Activated CD4-positive, alpha-beta memory T cell treated with anti-CD3 and anti-CD28 coated beads for 36 hours (primary cell): ENCODE measurements at regions of chr6 and their contacts with region 1.

Region 1: DNA sequence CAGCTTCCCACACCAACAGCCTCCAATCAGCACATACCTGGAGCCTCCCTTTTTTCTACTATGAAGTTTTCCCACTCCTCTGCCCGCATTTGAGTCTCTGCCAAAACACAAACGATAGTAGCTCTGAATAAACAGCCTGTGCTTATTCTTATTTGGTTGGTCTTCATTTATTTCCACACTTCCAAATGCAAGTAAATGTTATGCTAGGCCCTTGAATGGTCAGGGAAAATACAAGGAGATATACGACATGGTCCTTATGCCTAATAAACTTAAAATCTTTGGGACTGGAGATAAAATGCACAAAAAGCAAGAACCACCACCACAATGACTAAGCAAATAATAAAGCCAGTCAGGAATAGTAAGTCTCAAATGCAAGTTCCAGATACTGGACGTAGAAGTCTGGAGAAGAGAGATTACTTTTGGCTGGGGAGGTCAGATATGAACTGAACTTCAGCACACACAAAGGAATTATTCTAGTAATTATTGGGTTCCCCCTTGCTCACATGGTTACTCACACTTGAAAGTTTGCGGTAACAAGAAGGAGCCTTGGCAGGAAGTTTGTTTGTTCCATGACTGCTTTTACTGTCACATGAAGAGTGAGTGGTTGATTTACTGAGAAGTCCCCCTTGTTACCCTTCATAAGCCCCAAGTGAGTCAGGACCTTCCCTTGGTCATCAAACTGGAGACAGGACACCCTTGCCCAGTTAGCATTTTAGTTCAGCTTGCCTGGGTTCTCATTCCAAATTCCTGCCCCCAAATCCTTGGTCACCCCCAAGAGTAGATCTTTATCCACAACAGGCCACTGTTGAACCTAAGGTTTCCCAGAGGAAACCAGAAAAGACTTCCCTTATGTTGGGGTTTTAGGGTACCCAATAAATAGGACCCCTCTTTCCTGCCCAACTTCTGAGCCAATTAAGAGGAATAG is 511.2 kb upstream of the JARID2 start:
- DNase-seq: peak; percentile 67
- H3K4me3 Mint-ChIP-seq: peak overlapping the region; percentile 73
- H3K27ac Mint-ChIP-seq: peak overlapping the region; percentile 100
- H3K4me1 Mint-ChIP-seq: peaks cover 98% of the 10 kb centered on the region
- H3K27me3 Mint-ChIP-seq: no peaks in the 10 kb centered on the region

Region 2: GRCh38 chr6:14276667-14277404 is 457.8 kb before region 1 on chr6:
- CTCF ChIA-PET with region 1: no interaction called
- POLR2A ChIA-PET with region 1: no interaction called
- intact Hi-C with region 1: loop called (anchors 2 kb)
- DNase-seq: peak; percentile 44
- H3K4me3 Mint-ChIP-seq: no peak overlapping the region
- H3K27ac Mint-ChIP-seq: peak overlapping the region; percentile 85
- H3K4me1 Mint-ChIP-seq: peaks cover 39% of the 10 kb centered on the region
- H3K27me3 Mint-ChIP-seq: no peaks in the 10 kb centered on the region

Region 3: DNA sequence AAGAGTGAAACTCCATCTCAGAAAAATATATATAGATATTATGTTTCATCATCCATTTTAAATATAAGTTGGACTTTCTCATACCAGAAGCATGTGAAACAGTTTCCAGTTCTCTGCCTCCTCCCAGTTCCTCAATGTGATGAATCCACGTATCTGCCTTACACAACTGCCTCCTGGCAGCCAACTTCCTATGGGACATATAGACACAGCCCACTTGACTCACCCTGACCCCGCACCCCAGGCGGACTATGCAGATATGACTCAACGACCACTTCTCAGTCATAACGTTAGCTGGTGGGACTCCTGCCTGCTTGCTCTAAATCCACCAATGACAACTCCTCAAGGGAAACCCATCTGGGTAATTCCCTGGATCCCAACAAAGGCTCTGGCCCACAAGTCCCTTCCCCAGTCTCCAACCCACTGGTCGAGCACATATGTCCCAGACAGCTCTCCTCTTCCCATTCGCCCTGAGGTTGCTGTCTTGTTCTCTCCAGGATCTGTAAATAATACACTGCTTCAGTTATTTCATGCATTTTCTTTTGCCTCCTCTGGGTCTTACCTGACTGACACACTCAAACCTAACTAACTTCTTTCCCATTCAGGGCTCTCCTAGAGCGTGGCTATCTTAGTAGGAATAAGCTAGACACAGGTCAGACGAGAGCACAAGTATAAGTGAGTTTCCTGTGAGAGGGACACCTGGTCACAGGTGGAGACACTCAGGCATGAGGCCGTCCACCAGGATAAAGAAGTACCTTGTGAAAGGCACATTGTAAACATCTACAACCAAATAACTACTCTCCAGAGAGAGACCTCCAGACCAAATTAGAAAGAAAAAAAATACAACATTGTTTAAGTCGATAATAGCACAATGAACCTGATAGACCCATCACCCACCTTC is 68.6 kb before region 1 on chr6:
- CTCF ChIA-PET with region 1: no interaction called
- POLR2A ChIA-PET with region 1: no interaction called
- intact Hi-C with region 1: loop called (anchors 2 kb)
- DNase-seq: peak; percentile 84
- H3K4me3 Mint-ChIP-seq: no peak overlapping the region
- H3K27ac Mint-ChIP-seq: peak overlapping the region; percentile 11
- H3K4me1 Mint-ChIP-seq: peaks cover 25% of the 10 kb centered on the region
- H3K27me3 Mint-ChIP-seq: no peaks in the 10 kb centered on the region

Region 4: DNA sequence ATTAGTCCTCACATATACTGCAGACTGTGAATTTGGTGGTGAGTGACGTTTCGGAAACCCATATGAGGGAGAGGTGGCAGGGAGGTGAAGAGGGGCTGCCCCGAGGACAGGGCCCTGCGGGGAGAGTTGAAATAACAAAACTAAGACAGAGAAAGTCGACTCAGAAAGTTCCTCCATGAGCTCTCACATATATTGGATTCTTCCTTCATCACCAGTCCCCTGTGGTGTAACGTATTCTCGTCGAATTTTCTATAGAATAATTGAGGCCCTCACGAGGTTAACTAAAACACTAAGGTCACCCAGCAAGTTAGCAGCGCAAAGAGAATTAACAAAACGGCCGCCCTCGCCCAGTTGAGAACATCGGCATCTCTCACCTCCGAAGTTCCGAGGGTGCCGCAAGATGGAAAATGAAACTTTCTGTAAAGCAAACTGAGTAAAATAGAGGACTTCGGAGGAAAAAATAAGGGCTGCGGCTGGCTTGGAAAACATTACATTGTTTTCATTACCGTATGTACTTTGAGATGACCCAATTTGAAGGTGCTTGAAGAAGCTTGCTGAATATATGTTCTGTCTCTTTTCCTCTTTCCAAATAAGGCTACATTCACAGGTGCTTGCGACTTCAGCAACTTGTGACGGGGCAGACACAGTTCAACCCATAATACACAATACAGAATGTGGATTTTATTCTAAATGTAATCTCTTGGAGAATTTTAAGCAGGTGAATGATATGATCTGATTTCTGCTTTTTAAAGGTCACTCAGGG is 20.3 kb after region 1 on chr6:
- CTCF ChIA-PET with region 1: interaction called, 16 read pairs
- POLR2A ChIA-PET with region 1: interaction called, 84 read pairs
- intact Hi-C with region 1: loop called (anchors 1 kb)
- DNase-seq: peak; percentile 90
- H3K4me3 Mint-ChIP-seq: peak overlapping the region; percentile 61
- H3K27ac Mint-ChIP-seq: peak overlapping the region; percentile 100
- H3K4me1 Mint-ChIP-seq: peaks cover 73% of the 10 kb centered on the region
- H3K27me3 Mint-ChIP-seq: no peaks in the 10 kb centered on the region

Region 5: GRCh38 chr6:14765106-14765505 is 30.4 kb after region 1 on chr6:
- CTCF ChIA-PET with region 1: no interaction called
- POLR2A ChIA-PET with region 1: no interaction called
- intact Hi-C with region 1: no loop called
- DNase-seq: no peak
- H3K4me3 Mint-ChIP-seq: no peak overlapping the region
- H3K27ac Mint-ChIP-seq: no peak overlapping the region
- H3K4me1 Mint-ChIP-seq: peaks cover 19% of the 10 kb centered on the region
- H3K27me3 Mint-ChIP-seq: no peaks in the 10 kb centered on the region

Region 6: DNA sequence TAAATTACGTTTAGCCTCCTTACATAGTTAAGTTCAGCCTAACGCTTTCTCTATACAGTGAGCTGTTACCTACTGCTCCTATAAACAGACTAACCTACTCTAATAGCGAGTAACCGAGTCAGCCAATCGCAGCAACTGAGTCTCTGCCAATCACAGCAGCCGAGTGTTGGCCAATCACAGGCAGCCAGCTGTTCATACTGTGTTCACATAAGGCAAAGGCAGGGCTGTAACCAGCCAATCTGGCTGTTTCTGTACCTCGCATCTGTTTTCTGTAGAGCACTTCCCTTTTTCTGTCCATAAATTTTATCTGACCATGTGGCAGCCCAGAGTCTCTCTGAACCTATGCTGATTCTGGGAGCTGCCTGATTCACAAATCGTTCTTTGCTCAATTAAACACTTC is 247.3 kb after region 1 on chr6:
- CTCF ChIA-PET with region 1: no interaction called
- POLR2A ChIA-PET with region 1: no interaction called
- intact Hi-C with region 1: no loop called
- DNase-seq: no peak
- H3K4me3 Mint-ChIP-seq: no peak overlapping the region
- H3K27ac Mint-ChIP-seq: no peak overlapping the region
- H3K4me1 Mint-ChIP-seq: peaks cover 4% of the 10 kb centered on the region
- H3K27me3 Mint-ChIP-seq: peaks cover 6% of the 10 kb centered on the region

Region 7: DNA sequence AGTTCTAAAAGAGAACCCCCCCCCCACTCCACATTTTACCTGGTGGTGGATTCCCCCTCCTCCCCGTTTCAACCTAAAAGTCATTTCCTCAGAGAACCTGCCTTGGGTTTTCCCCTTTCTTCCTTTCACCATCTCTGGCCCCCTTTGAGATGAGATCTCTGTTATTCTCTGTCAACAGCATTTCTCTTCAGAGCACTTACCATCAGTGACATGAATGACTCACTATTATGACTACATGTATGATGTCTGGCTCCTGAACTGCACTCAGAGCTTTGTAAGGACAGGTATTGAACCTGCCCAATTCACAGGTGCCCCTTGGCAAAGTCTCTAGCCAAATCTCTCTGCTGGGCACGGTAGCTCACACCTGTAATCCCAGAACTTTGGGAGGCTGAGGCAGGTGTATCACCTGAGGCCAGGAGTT is 449.8 kb after region 1 on chr6:
- CTCF ChIA-PET with region 1: no interaction called
- POLR2A ChIA-PET with region 1: no interaction called
- intact Hi-C with region 1: loop called (anchors 2 kb)
- DNase-seq: peak; percentile 58
- H3K4me3 Mint-ChIP-seq: peak overlapping the region; percentile 37
- H3K27ac Mint-ChIP-seq: peak overlapping the region; percentile 95
- H3K4me1 Mint-ChIP-seq: peaks cover 20% of the 10 kb centered on the region
- H3K27me3 Mint-ChIP-seq: no peaks in the 10 kb centered on the region

Region 8: GRCh38 chr6:15491255-15491985 is 756.7 kb after region 1 on chr6:
- CTCF ChIA-PET with region 1: no interaction called
- POLR2A ChIA-PET with region 1: no interaction called
- intact Hi-C with region 1: loop called (anchors 10 kb)
- DNase-seq: peak; percentile 84
- H3K4me3 Mint-ChIP-seq: no peak overlapping the region
- H3K27ac Mint-ChIP-seq: peak overlapping the region; percentile 76
- H3K4me1 Mint-ChIP-seq: peaks cover 35% of the 10 kb centered on the region
- H3K27me3 Mint-ChIP-seq: no peaks in the 10 kb centered on the region